GM10248 (cell line): ENCODE measurements at regions of chr7 and their contacts with region 1.

Region 1: GRCh38 chr7:134632937-134633540 is 13.6 kb upstream of the BPGM start:
- DNase-seq: peak; percentile 26
- CTCF ChIP-seq: peak; percentile 61

Region 2: DNA sequence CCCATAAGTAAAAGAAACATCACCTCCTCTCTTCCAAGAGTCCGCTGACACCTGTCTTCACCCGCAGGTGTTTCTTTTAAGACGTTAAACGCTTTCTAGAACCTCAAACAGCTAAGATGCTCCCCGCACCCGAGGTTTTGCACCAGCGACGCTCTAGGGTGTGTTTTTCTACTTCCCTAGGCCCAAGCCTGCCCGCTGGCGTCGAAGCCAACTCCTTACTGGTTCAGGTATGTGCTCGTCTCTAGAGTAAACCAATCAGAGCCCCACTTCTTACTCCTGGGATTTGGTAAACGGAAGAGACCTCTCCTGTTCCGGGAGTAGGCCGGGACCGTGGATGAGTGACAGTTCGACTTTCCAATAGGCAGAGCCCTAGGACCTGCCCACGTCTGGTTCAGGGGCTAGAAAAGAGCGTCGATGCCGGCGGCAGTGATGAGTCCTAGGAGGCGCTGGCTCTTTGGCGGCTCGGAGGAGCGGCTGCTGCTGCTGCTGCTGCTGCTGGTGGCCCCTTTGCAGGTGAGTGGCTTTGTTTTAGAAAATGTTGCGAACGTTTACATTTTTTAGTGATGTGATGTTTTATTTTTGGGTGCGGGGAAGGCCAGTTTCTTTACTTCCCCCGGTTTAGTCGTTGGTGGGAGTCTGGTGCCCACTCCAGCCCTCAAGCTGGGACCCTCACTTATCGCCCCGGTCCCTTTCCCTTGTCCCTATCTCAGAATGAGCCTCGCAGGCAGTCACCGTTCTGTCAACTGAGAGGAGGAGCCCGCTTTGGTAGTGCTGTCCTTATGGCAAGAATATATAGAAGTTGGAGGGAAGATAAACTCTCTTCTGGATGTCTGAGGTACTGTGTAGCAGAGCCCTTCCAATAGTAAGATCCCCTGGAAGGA is 13.6 kb after region 1 on chr7 and contains the start of gene BPGM:
- CTCF ChIA-PET with region 1: interaction called, 99 read pairs
- POLR2A ChIA-PET with region 1: interaction called, 7 read pairs
- DNase-seq: peak; percentile 95
- CTCF ChIP-seq: peak; percentile 48

Region 3: GRCh38 chr7:134701272-134701671 is 68.2 kb after region 1 on chr7:
- CTCF ChIA-PET with region 1: interaction called, 21 read pairs
- POLR2A ChIA-PET with region 1: no interaction called
- DNase-seq: peak; percentile 29
- CTCF ChIP-seq: peak; percentile 45

Region 4: GRCh38 chr7:134724606-134725005 is 91.6 kb after region 1 on chr7:
- CTCF ChIA-PET with region 1: interaction called, 12 read pairs
- POLR2A ChIA-PET with region 1: no interaction called
- DNase-seq: peak; percentile 32
- CTCF ChIP-seq: peak; percentile 45

Region 5: DNA sequence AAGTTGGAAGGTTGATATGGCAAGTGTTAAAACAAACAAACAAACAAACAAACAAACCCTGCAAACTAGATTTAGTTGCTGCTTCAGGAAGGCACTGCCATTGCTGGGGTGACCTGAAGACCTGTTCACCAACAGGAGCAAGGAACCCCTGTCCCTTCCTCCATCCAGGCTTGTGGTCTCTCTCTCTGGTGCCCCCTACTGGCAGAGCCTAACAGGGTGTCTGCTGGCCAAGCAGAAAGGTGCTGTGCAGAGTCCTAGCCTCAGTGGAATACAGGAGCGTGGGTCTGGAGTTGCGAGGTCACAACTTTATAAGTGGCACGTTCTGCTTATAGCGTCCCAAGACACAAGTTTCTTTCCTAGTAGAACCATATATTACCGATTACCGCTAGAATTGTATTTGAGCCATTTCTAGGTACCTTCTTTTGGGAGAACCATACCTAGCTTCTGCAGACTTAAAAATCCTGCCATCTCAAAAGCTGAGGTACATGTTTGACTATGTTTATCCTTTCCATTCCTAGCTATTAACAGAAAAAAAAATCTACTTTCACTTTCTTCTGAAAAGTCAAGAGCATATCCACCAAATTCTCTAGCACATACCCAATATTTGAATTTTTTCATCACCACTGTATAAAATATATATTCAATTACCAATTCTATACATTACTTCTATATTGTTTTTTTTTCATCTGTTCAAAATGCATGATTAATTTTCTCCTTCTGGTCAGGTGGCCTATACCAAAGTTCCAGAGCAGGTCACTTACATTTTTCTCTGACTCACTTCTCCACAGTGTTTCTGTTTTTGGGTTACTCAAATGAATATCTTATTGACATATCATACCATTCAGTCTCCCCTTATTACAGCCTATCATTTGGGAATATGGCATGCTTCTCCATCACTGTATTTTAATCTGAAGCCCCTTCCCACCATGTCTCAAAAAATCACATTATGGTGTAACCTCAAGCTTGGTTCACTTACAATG is 117.3 kb after region 1 on chr7:
- CTCF ChIA-PET with region 1: interaction called, 14 read pairs
- POLR2A ChIA-PET with region 1: no interaction called
- DNase-seq: peak; percentile 68
- CTCF ChIP-seq: peak; percentile 73

Region 6: DNA sequence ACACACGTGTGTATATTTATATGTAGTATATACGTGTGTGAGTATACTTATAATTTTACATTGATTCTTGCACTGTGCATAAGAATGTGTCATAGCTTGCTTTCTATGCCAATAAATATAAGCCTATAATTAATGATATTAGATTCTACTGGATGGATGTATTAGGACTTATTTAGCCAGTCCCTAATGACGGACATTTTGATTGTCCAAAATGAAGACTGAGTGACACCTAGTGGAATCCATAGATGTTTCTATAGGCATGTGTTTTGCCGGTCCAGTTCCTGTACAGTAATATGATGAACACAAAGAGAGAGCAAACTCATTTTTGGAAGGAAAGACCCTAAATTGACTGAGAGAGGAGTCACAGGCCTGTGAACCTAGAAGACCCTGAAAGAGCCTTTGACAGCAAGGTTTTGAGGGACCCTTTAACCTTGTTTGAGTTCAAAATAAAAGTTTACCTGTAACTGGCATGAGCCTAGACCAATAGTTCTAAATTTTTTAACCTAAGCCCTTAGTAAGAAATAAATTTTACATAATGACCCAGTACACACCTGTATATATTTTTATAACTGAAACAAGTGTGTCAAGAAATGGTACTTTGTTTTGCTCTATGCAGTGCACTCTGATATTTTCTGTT is 310.8 kb after region 1 on chr7:
- CTCF ChIA-PET with region 1: interaction called, 14 read pairs
- POLR2A ChIA-PET with region 1: no interaction called
- DNase-seq: peak; percentile 43
- CTCF ChIP-seq: peak; percentile 40

Region 7: DNA sequence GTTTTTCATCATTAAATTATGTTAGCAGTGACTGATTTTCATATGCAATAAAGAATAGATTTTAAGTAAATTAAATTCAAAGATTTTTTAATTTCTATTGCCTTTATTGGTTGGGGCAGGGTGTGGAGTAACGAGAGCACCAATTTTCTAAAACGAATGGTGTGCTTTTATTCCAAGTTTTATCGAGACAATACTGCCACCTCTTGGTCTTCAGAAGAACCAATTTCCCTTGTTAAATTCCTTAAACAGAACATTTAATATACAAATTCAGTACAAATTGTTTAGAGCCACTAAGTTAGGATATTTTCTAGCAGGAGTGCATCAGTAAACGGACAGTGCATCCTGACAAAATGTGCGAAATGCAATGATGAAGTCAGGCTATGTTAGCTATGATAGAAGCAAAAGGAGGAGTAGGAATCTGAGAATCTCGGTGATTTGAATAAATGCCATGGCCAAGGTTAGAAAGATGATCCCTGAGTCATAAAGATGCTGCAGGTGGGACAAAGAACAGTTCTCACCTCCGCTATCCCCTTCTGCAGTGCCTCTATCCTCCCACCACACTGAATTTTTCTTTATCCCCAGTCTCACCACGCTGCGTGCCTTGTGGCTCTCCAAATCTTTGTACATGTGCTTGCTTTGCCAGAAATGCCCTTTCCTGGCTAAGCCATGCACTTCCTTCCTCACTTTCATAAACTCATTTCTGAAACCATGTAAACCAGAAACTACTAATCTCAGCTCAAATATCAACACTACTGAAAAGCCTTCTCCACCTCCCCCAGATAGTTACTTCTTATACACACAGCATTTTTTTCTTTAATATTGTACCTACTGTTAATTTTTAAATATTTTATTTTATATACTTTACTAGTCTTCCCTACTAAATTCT is 321.4 kb after region 1 on chr7:
- CTCF ChIA-PET with region 1: interaction called, 59 read pairs
- POLR2A ChIA-PET with region 1: no interaction called
- DNase-seq: peak; percentile 37
- CTCF ChIP-seq: peak; percentile 57